Activated CD8-positive, alpha-beta T cell treated with anti-CD3 and anti-CD28 coated beads for 36 hours (primary cell): ENCODE measurements at regions of chr11 and their contacts with region 1.

Region 1: DNA sequence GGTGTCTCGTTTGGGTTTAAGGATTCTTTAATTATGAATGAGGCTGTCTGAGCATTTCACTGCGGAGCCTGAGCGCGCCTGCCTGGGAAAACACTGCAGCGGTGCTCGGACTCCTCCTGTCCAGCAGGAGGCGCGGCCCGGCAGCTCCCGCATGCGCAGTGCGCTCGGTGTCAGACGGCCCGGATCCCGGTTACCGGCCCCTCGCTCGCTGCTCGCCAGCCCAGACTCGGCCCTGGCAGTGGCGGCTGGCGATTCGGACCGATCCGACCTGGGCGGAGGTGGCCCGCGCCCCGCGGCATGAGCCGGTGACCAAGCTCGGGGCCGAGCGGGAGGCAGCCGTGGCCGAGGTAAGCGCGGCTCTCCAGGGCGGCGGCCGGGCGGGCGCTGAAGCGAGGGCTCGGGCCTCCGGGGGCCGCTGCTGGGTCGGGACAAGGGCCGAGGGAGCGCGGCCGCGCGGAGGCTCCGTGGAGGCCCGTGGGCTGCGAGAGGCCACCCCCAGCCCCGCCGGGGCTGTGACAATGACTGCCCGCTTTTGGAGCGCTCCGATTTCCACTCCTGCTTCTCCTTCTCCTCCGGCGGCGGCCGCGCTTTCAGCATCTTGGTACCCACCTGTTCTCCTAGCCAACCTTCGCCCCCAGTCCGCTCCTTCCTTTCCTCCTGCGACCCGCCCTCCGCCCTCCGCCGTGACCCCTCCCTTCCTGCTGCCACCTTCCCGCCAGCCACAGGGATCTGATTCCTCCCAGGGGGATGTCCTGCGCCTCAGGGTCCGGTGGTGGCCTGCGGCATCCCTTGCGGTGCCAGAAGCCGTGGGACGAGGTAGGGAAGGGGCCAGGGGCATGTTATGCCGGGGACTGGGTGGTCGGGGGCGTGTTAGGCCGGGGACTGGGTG is at the start of gene EXT2:
- DNase-seq: peak; percentile 87
- ATAC-seq: peak; percentile 95
- H3K4me3 Mint-ChIP-seq: peak within 1 kb of the TSS; percentile 82
- H3K27ac Mint-ChIP-seq: peak within 1 kb of the TSS; percentile 48
- H3K4me1 Mint-ChIP-seq: peaks cover 34% of the 10 kb centered on the region
- H3K27me3 Mint-ChIP-seq: no peaks in the 10 kb centered on the region
- CTCF ChIP-seq: peak; percentile 83
- total RNA-seq, gene EXT2: 20.0 to 20.2 TPM

Region 2: DNA sequence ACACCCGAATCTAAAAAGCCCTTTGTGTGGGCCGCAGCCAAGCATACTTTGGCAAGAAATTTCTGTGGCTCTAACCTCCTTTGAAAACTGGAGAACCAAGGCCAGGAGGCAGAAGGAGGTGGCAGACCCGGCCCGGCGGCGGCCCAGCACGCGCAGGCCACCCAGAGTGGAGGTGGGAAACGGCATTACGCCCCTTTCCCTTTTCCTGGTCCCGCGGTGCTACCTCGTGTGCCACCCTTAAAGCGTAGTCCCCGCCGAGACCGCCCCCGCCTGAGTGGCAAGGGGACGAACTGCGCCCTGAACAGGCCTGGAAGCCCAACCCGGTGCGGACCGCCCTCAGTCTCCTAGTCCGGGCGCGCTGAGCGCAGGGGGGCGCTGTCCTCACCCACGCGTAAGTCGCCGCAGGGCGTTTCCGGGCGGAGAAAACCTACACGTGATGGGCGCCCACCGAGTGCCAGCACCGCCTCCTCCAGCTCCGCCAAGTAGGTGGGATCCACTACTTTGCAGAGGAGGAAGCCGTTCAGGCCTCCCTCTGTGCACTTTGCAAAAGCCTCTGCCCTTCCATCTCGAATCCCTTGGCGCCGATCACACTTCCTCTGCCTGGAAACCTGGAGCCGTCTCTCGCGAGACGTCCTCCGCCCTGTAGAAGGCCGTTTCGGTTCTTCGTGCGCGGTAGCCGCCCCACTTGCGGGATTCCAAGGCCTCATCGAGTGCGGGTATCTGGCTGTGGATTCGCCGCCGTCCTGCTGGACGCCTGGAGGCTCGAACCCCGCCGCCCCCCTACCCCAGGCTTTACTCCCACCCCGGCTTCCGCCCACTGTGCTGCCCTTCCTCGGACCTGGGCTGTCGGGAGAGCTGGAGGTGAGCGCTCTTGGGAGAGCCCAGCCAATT is 29.7 kb before region 1 on chr11 and contains the start of gene ACCS:
- CTCF ChIA-PET with region 1: interaction called, 43 read pairs
- POLR2A ChIA-PET with region 1: no interaction called
- intact Hi-C with region 1: no loop called
- DNase-seq: peak; percentile 95
- ATAC-seq: peak; percentile 97
- H3K4me3 Mint-ChIP-seq: peak within 1 kb of the TSS; percentile 80
- H3K27ac Mint-ChIP-seq: peak within 1 kb of the TSS; percentile 90
- H3K4me1 Mint-ChIP-seq: peaks cover 23% of the 10 kb centered on the region
- H3K27me3 Mint-ChIP-seq: no peaks in the 10 kb centered on the region
- CTCF ChIP-seq: peak; percentile 76
- total RNA-seq, gene ACCS: 6.7 to 7.1 TPM

Region 3: GRCh38 chr11:44071157-44071556 is 24.6 kb before region 1 on chr11:
- CTCF ChIA-PET with region 1: interaction called, 43 read pairs
- POLR2A ChIA-PET with region 1: no interaction called
- intact Hi-C with region 1: no loop called
- DNase-seq: no peak
- ATAC-seq: no peak
- H3K4me3 Mint-ChIP-seq: no peak overlapping the region
- H3K27ac Mint-ChIP-seq: no peak overlapping the region
- H3K4me1 Mint-ChIP-seq: peaks cover 14% of the 10 kb centered on the region
- H3K27me3 Mint-ChIP-seq: no peaks in the 10 kb centered on the region
- CTCF ChIP-seq: no peak

Region 4: DNA sequence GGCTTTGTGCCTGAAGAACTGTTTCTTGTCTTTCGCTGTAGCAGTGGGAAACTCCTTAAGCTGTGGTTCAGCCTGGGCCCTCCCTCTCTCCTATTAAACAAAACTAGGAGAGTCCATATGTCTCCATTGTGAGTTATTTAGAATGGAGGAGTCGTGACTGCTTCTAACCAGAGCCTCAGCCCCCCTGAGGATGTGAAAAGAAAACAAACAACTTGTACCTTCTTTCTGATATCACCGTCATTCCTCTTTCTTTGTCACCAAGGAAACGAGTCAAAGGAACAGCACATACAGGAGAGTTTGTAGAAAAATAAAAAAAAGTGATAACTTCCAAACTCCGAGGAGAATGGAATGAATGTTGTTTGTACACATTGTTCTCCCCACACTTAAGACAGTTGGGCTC is 11.8 kb before region 1 on chr11:
- CTCF ChIA-PET with region 1: interaction called, 25 read pairs
- POLR2A ChIA-PET with region 1: no interaction called
- intact Hi-C with region 1: no loop called
- DNase-seq: no peak
- ATAC-seq: no peak
- H3K4me3 Mint-ChIP-seq: no peak overlapping the region
- H3K27ac Mint-ChIP-seq: no peak overlapping the region
- H3K4me1 Mint-ChIP-seq: peaks cover 2% of the 10 kb centered on the region
- H3K27me3 Mint-ChIP-seq: no peaks in the 10 kb centered on the region
- CTCF ChIP-seq: no peak

Region 5: GRCh38 chr11:44110231-44110679 is 14.5 kb after region 1 on chr11:
- CTCF ChIA-PET with region 1: interaction called, 108 read pairs
- POLR2A ChIA-PET with region 1: interaction called, 5 read pairs
- intact Hi-C with region 1: no loop called
- DNase-seq: peak; percentile 80
- ATAC-seq: peak; percentile 99
- H3K4me3 Mint-ChIP-seq: no peak overlapping the region
- H3K27ac Mint-ChIP-seq: peak overlapping the region; percentile 44
- H3K4me1 Mint-ChIP-seq: peaks cover 14% of the 10 kb centered on the region
- H3K27me3 Mint-ChIP-seq: no peaks in the 10 kb centered on the region
- CTCF ChIP-seq: peak; percentile 90

Region 6: DNA sequence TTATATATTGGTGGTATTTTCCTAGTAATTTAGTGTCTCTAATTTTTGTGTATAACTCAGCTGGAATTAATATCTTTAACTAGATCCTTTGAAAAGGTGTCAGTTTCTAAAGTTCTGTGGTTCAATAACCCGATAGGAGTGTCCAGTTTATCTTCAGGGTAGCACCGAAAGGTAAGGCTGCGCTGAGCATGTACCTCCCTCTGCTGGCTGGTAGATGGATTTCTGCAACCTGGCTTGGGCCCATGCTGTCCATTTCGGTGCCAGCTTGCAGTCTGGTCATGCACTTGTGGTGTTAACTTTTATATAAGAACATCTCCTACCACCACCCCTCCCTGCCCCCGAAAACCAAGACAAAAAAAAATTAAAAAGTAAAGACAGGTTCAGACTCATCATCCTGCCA is 24.4 kb after region 1 on chr11:
- CTCF ChIA-PET with region 1: interaction called, 13 read pairs
- POLR2A ChIA-PET with region 1: interaction called, 3 read pairs
- intact Hi-C with region 1: no loop called
- DNase-seq: no peak
- ATAC-seq: no peak
- H3K4me3 Mint-ChIP-seq: no peak overlapping the region
- H3K27ac Mint-ChIP-seq: no peak overlapping the region
- H3K4me1 Mint-ChIP-seq: no peaks in the 10 kb centered on the region
- H3K27me3 Mint-ChIP-seq: no peaks in the 10 kb centered on the region
- CTCF ChIP-seq: no peak

Region 7: GRCh38 chr11:44538375-44539054 is 442.8 kb after region 1 on chr11:
- CTCF ChIA-PET with region 1: interaction called, 5 read pairs
- POLR2A ChIA-PET with region 1: no interaction called
- intact Hi-C with region 1: loop called (anchors 10 kb)
- DNase-seq: peak; percentile 81
- ATAC-seq: peak; percentile 97
- H3K4me3 Mint-ChIP-seq: no peak overlapping the region
- H3K27ac Mint-ChIP-seq: no peak overlapping the region
- H3K4me1 Mint-ChIP-seq: no peaks in the 10 kb centered on the region
- H3K27me3 Mint-ChIP-seq: no peaks in the 10 kb centered on the region
- CTCF ChIP-seq: peak; percentile 96